ENCODE measurements at regions of chr7 and their contacts with region 1.

Region 1: GRCh38 chr7:44638611-44639557 is 32.5 kb downstream of the OGDH start:
- DNase-seq: peak; percentile 58 to 91 (median 82)
- ATAC-seq: peak; percentile 56
- H3K4me3 ChIP-seq: peak overlapping the region in 1 of 2 experiments; percentile 9
- H3K4me3 Mint-ChIP-seq: peak overlapping the region; percentile 75
- H3K27ac ChIP-seq: peak overlapping the region; percentile 73 to 97
- H3K27ac Mint-ChIP-seq: peak overlapping the region; percentile 99
- H3K4me1 ChIP-seq: peaks cover 59% of the 10 kb centered on the region
- H3K4me1 Mint-ChIP-seq: peaks cover 66% of the 10 kb centered on the region
- H3K27me3 ChIP-seq: no peaks in the 10 kb centered on the region
- H3K27me3 Mint-ChIP-seq: no peaks in the 10 kb centered on the region
- CTCF ChIP-seq: no peak

Region 2: GRCh38 chr7:44398511-44398911 is 240.4 kb before region 1 on chr7:
- CTCF ChIA-PET with region 1: no interaction called
- POLR2A ChIA-PET with region 1: no interaction called
- intact Hi-C with region 1: no loop called
- DNase-seq: no peak
- ATAC-seq: no peak
- H3K4me3 ChIP-seq: no peak overlapping the region
- H3K4me3 Mint-ChIP-seq: no peak overlapping the region
- H3K27ac ChIP-seq: no peak overlapping the region
- H3K27ac Mint-ChIP-seq: no peak overlapping the region
- H3K4me1 ChIP-seq: no peaks in the 10 kb centered on the region
- H3K4me1 Mint-ChIP-seq: peaks cover 2% of the 10 kb centered on the region
- H3K27me3 ChIP-seq: no peaks in the 10 kb centered on the region
- H3K27me3 Mint-ChIP-seq: no peaks in the 10 kb centered on the region
- CTCF ChIP-seq: no peak

Region 3: DNA sequence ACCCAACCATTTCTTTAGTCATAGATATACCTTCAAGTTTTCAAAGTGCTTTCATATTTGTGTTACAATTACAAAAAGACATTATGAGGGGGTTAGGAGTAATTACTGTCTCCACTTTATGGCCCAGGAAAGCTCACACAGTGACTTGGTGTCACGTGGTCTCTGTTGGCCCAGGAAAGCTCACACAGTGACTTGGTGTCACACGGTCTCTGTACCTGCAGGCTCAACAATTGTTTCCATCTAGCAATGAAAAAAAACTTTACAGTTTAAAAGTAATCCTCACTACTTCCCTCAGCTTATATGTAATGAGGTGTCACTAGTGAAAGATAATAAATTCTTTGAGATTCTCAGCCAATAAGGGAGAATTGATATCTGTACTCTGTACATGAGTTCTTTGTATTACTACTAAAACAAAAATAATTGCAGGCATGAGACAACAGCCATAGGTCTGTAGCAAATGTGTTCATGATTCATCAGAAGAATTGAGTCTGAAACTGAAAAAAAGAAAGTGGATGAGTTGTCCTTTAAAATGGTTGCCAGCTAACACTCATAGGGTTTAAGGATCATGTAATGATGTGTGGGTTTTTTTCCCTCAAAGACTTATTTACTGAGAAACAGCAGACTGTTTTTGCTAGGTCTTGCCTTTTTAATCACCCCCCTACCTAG is 21.5 kb before region 1 on chr7:
- CTCF ChIA-PET with region 1: no interaction called
- POLR2A ChIA-PET with region 1: interaction called, 3 read pairs
- intact Hi-C with region 1: loop called in 1 of 2 experiments (anchors 2 kb)
- DNase-seq: no peak
- ATAC-seq: peak; percentile 45
- H3K4me3 ChIP-seq: no peak overlapping the region
- H3K4me3 Mint-ChIP-seq: no peak overlapping the region
- H3K27ac ChIP-seq: peak overlapping the region in 1 of 2 experiments; percentile 12
- H3K27ac Mint-ChIP-seq: peak overlapping the region; percentile 55
- H3K4me1 ChIP-seq: peaks cover 27% of the 10 kb centered on the region
- H3K4me1 Mint-ChIP-seq: peaks cover 70% of the 10 kb centered on the region
- H3K27me3 ChIP-seq: no peaks in the 10 kb centered on the region
- H3K27me3 Mint-ChIP-seq: no peaks in the 10 kb centered on the region
- CTCF ChIP-seq: no peak

Region 4: DNA sequence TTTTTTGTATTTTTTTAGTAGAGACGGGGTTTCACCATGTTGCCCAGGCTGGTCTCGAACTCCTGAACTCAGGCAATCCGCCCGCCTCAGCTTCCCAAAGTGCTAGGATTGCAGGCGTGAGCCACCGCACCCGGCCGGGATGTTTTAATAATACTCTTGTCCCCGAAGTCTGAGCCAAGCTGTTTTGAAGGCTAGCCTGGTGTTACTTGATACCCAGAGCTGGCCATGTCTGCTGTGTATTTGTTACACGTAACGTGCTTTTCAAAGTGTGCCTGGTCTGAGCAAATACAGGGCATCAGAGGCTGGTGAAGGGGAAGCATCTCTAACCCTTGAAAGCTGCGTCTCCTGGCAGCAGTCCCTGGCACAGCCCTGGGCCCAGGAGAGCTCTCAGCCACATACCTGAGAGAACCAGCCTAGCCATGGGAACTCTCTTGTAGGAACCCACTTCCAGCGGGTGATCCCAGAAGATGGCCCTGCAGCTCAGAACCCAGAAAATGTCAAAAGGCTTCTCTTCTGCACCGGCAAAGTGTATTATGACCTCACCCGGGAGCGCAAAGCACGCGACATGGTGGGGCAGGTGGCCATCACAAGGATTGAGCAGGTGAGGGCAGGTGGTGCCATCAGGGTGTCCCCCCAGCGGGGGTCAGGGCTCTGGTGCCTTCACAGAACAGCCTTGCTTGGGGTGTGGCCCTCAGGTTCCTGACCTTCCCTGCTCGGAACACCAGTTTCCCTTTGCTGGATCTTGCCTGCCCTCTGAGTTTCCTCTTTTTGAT is 68.1 kb after region 1 on chr7:
- CTCF ChIA-PET with region 1: no interaction called
- POLR2A ChIA-PET with region 1: no interaction called
- intact Hi-C with region 1: no loop called
- DNase-seq: no peak
- ATAC-seq: no peak
- H3K4me3 ChIP-seq: no peak overlapping the region
- H3K4me3 Mint-ChIP-seq: no peak overlapping the region
- H3K27ac ChIP-seq: no peak overlapping the region
- H3K27ac Mint-ChIP-seq: peak overlapping the region; percentile 52
- H3K4me1 ChIP-seq: no peaks in the 10 kb centered on the region
- H3K4me1 Mint-ChIP-seq: peaks cover 5% of the 10 kb centered on the region
- H3K27me3 ChIP-seq: no peaks in the 10 kb centered on the region
- H3K27me3 Mint-ChIP-seq: no peaks in the 10 kb centered on the region
- CTCF ChIP-seq: no peak

Measured in CD8-positive, alpha-beta T cell (primary cell).